ENCODE measurements at regions of chr11 and their contacts with region 1.

Region 1: GRCh38 chr11:118435893-118436624 is at the start of gene KMT2A:
- DNase-seq: peak; percentile 88 to 99 (median 98)

Region 2: GRCh38 chr11:118488480-118489109 is 52.5 kb after region 1 on chr11:
- intact Hi-C with region 1: loop called (anchors 5 kb)
- DNase-seq: peak; percentile 22 to 87 (median 66)